PC-9 (cell line): ENCODE measurements at regions of chr1 and their contacts with region 1.

Region 1: DNA sequence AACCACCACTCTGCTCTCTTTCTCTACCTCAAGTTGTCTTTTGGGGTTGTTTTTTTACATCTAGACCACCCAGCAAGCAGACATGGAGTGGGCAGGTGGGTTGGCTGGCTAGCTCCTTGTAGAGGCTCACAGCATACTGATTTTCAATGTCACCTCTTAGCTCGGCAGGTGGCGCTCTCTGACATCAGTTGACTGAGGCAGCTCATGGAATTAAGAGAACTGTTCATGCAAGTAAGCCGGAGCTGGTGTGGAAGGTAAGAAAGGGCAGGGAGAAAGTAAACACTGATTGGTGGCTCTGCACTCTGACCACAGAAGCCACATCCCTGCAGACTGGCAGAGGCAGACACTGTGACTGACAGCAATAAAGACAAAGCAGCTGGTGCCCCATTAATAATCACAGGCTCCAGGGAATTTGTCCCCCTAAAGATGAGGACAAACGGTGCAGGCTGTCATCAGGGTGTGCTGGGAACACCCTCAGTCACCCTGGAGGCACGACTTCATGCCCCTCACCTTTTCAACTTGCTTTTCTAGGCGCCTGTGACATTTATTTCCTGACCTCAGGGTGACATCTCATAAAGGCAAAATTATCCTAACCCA is 226.8 kb downstream of the LMX1A start:
- DNase-seq: peak; percentile 61 to 69
- H3K4me3 ChIP-seq: no peak overlapping the region
- H3K27ac ChIP-seq: no peak overlapping the region
- H3K4me1 ChIP-seq: no peaks in the 10 kb centered on the region
- H3K27me3 ChIP-seq: peaks cover 27% of the 10 kb centered on the region
- CTCF ChIP-seq: peak; percentile 85

Region 2: DNA sequence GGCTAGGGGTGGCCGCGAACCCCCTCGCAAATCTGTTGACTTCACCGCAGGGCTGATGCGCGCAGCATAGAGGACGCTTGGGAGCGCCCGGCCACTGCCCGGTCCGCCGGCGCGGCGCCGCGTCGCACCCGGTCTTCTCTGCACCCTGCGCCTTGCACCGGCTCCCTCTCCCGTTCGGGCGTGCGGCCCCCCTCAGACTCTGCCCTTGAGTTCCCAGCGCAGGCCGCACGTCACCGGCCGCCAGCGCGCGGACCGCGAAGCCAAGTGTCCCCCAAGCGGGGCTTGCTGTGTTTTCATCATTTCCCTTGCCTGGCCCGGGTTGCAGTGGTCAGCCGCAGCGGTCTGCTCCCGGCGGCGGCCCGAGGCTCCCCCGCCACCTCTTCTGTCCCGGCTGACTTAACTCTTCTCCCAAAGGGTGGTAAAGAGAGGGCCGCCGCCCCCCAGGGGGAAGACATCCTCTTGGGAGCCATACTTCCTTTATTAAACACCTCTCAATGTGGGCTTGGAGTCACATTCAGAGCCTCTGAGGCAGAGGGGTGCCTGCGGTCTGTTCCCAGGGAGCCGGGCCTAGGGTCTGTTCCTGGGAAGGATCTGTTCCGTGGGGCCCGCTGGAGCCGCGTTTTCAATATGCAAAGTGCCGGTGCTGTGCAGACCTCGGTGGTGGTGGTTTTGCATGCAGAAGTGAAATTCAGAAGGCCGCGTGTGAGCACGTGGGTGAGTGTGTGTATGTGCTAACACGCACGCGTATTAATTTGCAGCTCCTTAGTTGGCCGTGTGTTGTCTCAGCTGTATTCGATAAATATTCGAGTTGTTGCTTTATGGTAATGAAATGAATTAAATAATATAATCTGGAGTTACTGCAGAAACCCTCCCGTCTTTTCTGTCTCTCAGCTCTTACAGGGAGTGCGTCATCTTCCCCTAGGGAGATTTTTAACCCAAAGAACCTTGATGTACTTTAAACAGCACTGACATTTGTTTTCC is 553.1 kb before region 1 on chr1:
- CTCF ChIA-PET with region 1: no interaction called
- POLR2A ChIA-PET with region 1: no interaction called
- intact Hi-C with region 1: no loop called
- DNase-seq: no peak
- H3K4me3 ChIP-seq: no peak overlapping the region
- H3K27ac ChIP-seq: no peak overlapping the region
- H3K4me1 ChIP-seq: no peaks in the 10 kb centered on the region
- H3K27me3 ChIP-seq: no peaks in the 10 kb centered on the region
- CTCF ChIP-seq: no peak

Region 3: DNA sequence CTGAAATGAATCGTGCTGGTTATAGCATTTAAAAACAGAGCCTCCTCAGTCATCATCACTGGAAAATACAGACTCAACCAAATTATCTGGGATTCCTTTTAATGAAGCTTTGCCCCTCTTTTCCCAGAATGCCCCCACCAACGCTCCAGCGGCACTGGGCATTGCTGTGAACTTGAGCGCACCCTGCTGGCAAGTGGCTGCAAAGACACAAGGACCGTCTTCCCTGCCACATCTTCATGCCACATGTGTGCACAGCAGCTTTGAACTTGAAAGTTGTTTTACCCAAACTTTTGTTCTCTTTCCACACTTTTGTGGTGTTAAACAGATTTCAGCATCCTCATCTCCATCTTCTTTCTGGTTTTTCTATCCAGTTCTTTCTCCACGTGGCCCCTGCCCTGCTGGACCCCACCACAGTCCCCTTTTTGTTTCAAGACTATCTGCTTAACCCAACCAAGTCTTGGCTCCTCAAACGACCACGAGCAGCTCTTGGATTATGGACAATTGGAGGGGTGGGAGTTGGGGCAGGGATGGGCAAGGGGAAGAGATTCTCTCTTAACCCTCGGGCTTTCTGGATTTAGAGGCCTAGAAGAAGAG is 239.7 kb after region 1 on chr1:
- CTCF ChIA-PET with region 1: interaction called, 7 read pairs
- POLR2A ChIA-PET with region 1: no interaction called
- intact Hi-C with region 1: loop called (anchors 1 kb)
- DNase-seq: peak in 1 of 2 experiments; percentile 25
- H3K4me3 ChIP-seq: no peak overlapping the region
- H3K27ac ChIP-seq: no peak overlapping the region
- H3K4me1 ChIP-seq: no peaks in the 10 kb centered on the region
- H3K27me3 ChIP-seq: no peaks in the 10 kb centered on the region
- CTCF ChIP-seq: peak; percentile 88